Activated CD4-positive, alpha-beta T cell treated with anti-CD3 and anti-CD28 coated beads, Interleukin-2, amount 10 ng/mL, durations not matched to agents 24 days and 14 days (primary cell): ENCODE measurements at regions of chr15 and their contacts with region 1.

Region 1: DNA sequence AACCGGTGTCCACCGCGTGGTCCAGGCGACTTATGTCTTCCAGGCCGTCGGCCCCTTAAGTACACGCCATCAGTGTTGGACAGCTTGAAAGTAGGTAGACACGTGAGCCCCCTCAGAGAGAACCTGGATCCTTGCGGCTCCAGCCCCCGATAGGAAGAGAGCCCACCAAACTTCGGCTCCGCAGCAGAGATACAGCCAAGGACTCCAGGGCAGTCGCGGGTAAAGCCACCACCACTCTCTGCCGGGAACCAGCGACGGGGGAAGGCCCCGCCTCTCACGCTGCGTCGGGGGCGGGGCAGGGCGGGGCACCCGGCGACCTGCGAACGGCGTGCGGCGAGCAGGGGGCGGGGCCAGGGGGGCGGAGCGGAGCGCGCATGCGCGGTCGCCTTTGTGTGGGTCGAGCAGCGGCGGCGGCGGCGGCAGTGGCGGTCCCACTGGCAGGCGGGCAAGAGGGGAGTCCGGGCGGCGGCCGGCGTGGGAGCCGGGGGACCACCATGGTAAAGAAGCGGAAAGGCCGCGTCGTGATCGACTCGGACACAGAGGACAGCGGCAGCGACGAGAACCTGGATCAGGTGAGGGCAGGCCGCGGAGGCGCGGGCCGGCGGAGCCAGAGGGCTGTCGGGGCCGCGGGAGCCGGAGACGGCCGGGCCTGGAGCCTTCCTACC is at the start of gene RTF1:
- DNase-seq: peak; percentile 100
- H3K4me3 Mint-ChIP-seq: peak within 1 kb of the TSS; percentile 100
- H3K27ac Mint-ChIP-seq: peak within 1 kb of the TSS; percentile 97
- H3K4me1 Mint-ChIP-seq: peaks cover 37% of the 10 kb centered on the region
- H3K27me3 Mint-ChIP-seq: no peaks in the 10 kb centered on the region
- total RNA-seq, gene RTF1: 36.6 and 38.1 TPM in 2 replicates

Region 2: GRCh38 chr15:41230650-41231533 is 186.0 kb before region 1 on chr15 and contains the starts of genes CHP1 and EXD1:
- intact Hi-C with region 1: loop called (anchors 1 kb)
- DNase-seq: peak; percentile 99
- H3K4me3 Mint-ChIP-seq: peak within 1 kb of the TSS; percentile 94
- H3K27ac Mint-ChIP-seq: peak within 1 kb of the TSS; percentile 93
- H3K4me1 Mint-ChIP-seq: peaks cover 19% of the 10 kb centered on the region
- H3K27me3 Mint-ChIP-seq: peaks cover 2% of the 10 kb centered on the region
- total RNA-seq, gene CHP1: 47.4 and 47.8 TPM in 2 replicates
- total RNA-seq, gene EXD1: not detected in 2 replicates

Region 3: DNA sequence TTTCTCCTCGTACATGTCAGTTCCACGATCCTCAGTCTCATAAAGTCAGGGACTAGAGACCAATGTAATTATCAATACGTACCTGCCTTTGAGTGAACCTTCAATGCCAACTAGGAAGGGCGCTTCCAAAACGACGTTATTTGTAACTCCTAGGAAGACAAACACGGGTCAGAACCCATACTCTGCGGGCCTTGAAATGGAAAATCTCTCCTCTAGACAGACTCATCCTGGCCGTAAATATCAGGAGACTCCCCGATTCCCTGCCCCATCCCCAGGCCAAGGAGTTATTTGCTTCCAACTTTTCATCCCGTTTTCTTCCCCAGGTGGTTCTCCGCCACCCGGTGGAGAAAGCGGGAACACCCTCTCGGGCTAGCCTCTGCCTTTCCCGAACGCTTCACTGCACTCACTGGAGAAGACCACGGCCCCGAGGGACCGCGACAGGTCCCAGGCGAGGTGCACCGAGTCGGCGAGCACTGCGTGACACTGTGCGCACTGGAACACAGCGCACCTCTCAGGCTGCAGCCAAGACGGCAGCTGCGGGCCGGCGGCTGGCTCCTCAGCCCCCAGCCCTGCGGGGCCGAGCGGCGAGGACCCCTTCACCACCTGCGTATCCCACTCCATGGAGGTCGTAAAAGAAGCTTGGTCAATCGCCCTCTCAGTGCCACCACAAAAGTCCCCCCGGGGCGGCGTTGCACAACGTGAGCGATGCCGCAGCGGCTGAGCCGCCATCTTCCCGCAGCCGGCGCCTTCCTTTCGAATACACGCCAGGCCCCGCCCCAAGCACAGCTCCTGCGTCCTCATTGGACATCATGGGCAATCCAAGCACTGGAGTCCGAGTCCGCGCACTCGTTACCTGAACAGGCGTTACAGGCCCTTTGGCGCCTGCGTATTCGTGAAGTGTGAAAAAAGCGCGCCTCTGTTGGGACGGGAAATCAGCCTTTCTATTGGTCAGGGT is 84.8 kb before region 1 on chr15 and contains the start of gene OIP5:
- intact Hi-C with region 1: loop called (anchors 1 kb)
- DNase-seq: peak; percentile 100
- H3K4me3 Mint-ChIP-seq: peak within 1 kb of the TSS; percentile 95
- H3K27ac Mint-ChIP-seq: peak within 1 kb of the TSS; percentile 98
- H3K4me1 Mint-ChIP-seq: peaks cover 29% of the 10 kb centered on the region
- H3K27me3 Mint-ChIP-seq: no peaks in the 10 kb centered on the region
- total RNA-seq, gene OIP5: 15.8 and 21.0 TPM in 2 replicates

Region 4: GRCh38 chr15:41401904-41402267 is 15.0 kb before region 1 on chr15:
- intact Hi-C with region 1: loop called (anchors 2 kb)
- DNase-seq: no peak
- H3K4me3 Mint-ChIP-seq: peak overlapping the region; percentile 93
- H3K27ac Mint-ChIP-seq: peak overlapping the region; percentile 94
- H3K4me1 Mint-ChIP-seq: peaks cover 12% of the 10 kb centered on the region
- H3K27me3 Mint-ChIP-seq: no peaks in the 10 kb centered on the region

Region 5: DNA sequence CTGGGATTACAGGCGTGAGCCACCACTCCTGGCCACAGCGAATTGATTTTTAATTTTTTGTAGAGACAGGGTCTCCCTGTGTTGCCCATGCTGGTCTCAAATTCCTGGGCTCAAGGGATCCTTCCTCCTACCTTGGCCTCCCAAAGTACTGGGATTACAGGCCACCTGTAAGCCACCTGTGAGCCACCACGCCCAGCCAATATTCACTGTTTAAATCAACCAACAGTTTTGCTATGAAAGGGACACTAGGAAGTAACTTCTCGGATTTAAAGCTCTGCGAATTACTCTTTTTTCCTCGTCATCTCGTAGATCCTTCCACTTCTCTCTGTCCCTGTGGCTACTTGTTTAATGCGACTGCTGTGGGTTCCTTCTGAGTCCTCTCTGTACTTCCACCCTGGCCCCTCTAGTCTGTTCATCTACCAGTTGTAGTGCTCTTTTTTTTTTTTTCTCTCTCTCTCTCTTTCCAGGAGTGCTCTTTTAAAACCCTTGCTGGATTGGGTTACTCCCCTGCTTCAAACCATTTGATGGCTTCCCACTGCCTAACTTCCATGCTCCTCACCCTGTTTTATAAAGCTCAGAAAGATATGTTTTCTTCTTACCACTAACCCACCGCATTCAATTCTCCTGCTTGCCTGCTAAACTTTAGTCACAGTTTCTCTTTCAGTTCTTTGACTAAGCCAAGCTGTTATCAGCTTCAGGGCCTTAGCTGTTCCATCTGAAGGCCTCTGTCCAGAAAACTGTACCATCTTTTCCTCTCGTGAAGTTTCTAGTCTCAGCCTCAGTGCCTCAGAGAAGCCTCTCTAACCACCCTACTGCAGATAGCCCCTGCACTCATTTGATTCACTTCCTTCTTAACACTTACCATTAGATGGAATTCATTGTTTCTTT is 12.4 kb after region 1 on chr15:
- intact Hi-C with region 1: loop called (anchors 1 kb)
- DNase-seq: peak; percentile 77
- H3K4me3 Mint-ChIP-seq: peak overlapping the region; percentile 82
- H3K27ac Mint-ChIP-seq: peak overlapping the region; percentile 93
- H3K4me1 Mint-ChIP-seq: peaks cover 24% of the 10 kb centered on the region
- H3K27me3 Mint-ChIP-seq: no peaks in the 10 kb centered on the region